Activated CD4-positive, alpha-beta memory T cell treated with anti-CD3 and anti-CD28 coated beads, Interleukin-2, amount 10 ng/mL, durations not matched to agents 7 days and 5 days (primary cell): ENCODE measurements at regions of chr6 and their contacts with region 1.

Region 1: GRCh38 chr6:136643850-136644596 is 93.8 kb upstream of the MAP7 start:
- DNase-seq: peak; percentile 82
- H3K4me3 Mint-ChIP-seq: no peak overlapping the region
- H3K27ac Mint-ChIP-seq: no peak overlapping the region
- H3K4me1 Mint-ChIP-seq: peaks cover 8% of the 10 kb centered on the region
- H3K27me3 Mint-ChIP-seq: no peaks in the 10 kb centered on the region

Region 2: DNA sequence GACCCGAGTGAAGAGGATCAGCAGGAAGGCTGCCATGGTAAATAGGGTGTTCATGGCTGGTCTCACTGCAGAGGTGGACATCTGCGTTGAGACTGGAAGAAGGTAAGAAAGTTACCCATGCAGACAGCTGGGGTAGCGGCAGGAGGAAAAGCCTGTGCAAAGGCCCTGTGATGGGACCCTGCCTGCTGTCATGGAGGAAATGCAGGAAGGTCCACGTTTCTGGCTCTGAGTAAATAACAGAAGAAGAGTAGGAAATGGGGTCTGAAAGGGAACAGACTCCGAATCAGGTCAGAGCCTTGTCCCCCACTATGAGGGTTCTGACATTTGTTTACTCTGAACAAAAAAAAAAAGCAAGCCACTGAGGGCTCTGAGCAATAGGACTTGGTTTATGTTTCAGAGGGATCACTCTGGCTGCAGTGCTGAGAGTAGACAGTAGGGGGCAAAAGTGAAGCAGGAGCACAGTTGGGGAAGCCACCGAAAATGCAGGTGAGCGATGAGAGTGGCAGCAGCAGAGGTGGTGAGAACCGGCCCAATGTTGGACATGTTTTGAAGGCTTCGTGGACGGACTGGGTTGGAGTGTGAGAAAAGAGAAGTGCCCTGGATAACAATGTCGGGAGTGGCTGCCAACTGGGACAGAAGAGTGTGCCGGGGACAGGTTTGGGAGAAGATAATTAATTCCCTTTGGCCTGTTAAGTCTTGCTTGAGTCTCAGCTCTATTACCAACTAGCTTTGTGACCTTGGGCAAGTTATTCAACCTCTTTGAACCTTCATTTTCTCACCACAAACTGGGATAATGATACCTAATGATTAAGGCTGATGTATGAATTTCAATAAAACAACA is 35.9 kb before region 1 on chr6:
- CTCF ChIA-PET with region 1: interaction called, 10 read pairs
- POLR2A ChIA-PET with region 1: interaction called, 3 read pairs
- DNase-seq: peak; percentile 85
- H3K4me3 Mint-ChIP-seq: no peak overlapping the region
- H3K27ac Mint-ChIP-seq: no peak overlapping the region
- H3K4me1 Mint-ChIP-seq: peaks cover 30% of the 10 kb centered on the region
- H3K27me3 Mint-ChIP-seq: no peaks in the 10 kb centered on the region

Region 3: DNA sequence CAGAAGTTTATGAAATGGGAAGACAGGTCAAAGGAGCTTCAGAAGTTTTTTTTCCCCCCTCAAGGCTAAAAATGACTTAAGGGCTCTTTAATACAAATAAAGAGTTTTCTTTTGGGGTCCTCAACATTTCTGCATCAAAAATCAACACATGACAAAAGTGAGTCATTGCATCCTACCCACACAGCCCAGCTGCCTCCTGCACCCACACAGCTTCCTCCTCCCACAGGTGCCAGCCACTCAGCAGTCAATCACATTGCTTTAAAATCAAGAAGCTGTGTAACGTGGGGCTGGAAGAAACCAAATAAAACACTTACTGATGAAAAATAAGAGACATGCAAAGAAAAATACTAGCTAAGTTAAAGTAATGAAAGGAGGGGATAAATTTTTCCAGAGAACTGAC is 79.8 kb after region 1 on chr6:
- CTCF ChIA-PET with region 1: interaction called, 14 read pairs
- POLR2A ChIA-PET with region 1: interaction called, 6 read pairs
- DNase-seq: peak; percentile 56
- H3K4me3 Mint-ChIP-seq: no peak overlapping the region
- H3K27ac Mint-ChIP-seq: no peak overlapping the region
- H3K4me1 Mint-ChIP-seq: peaks cover 43% of the 10 kb centered on the region
- H3K27me3 Mint-ChIP-seq: no peaks in the 10 kb centered on the region

Region 4: DNA sequence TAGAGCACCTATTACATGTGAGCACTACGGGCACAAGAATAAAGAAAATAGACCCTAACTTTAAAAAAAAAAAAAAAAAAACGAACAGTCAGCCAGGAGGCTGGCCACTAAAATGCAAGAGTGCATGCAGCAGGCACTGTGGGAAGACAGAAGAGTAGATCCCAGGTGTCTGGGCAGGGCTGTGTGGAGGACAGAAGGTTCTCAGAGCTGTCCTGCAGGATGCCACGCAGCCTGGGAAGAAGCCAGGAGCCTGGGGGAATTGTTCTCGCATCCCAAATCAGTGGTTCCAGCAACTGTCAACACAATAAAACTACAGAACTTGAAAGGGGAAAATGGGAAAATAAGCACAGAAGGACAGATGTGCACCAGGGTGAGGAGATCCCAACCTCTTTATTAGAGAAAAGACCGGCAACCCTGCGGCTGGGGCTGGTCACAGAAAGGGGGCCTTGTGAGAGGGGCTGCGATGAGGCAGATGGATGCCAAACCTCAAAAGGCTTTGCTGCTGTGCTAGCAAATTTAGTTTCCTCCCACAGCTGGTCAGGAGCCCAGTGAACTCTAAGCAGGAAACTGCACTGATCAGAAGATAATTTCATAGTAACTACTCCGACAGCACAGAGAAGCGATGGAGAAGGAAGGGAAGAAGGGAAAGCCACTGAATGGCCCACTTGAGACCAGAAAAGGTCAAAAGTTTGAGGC is 117.4 kb after region 1 on chr6:
- CTCF ChIA-PET with region 1: interaction called, 16 read pairs
- POLR2A ChIA-PET with region 1: interaction called, 4 read pairs
- DNase-seq: peak; percentile 34
- H3K4me3 Mint-ChIP-seq: peak overlapping the region; percentile 38
- H3K27ac Mint-ChIP-seq: peak overlapping the region; percentile 21
- H3K4me1 Mint-ChIP-seq: peaks cover 66% of the 10 kb centered on the region
- H3K27me3 Mint-ChIP-seq: no peaks in the 10 kb centered on the region